ENCODE measurements at regions of chr15 and their contacts with region 1.

Region 1: GRCh38 chr15:93018580-93018979 is 70.4 kb downstream of the RGMA start:
- DNase-seq: no peak
- ATAC-seq: no peak
- H3K4me3 Mint-ChIP-seq: no peak overlapping the region
- H3K27ac Mint-ChIP-seq: peak overlapping the region; percentile 41
- H3K4me1 Mint-ChIP-seq: peaks cover 62% of the 10 kb centered on the region
- H3K27me3 Mint-ChIP-seq: no peaks in the 10 kb centered on the region

Region 2: GRCh38 chr15:92903941-92904831 is 114.4 kb before region 1 on chr15:
- CTCF ChIA-PET with region 1: no interaction called
- DNase-seq: peak; percentile 100
- ATAC-seq: peak; percentile 87
- H3K4me3 Mint-ChIP-seq: peak overlapping the region; percentile 79
- H3K27ac Mint-ChIP-seq: peak overlapping the region; percentile 99
- H3K4me1 Mint-ChIP-seq: peaks cover 51% of the 10 kb centered on the region
- H3K27me3 Mint-ChIP-seq: no peaks in the 10 kb centered on the region

Region 3: GRCh38 chr15:93030430-93031105 is 12.0 kb after region 1 on chr15:
- CTCF ChIA-PET with region 1: interaction called, 29 read pairs
- DNase-seq: peak; percentile 73
- ATAC-seq: peak; percentile 86
- H3K4me3 Mint-ChIP-seq: no peak overlapping the region
- H3K27ac Mint-ChIP-seq: no peak overlapping the region
- H3K4me1 Mint-ChIP-seq: peaks cover 12% of the 10 kb centered on the region
- H3K27me3 Mint-ChIP-seq: no peaks in the 10 kb centered on the region

Region 4: GRCh38 chr15:93265111-93265556 is 246.6 kb after region 1 on chr15:
- CTCF ChIA-PET with region 1: no interaction called
- DNase-seq: no peak
- ATAC-seq: no peak
- H3K4me3 Mint-ChIP-seq: no peak overlapping the region
- H3K27ac Mint-ChIP-seq: no peak overlapping the region
- H3K4me1 Mint-ChIP-seq: no peaks in the 10 kb centered on the region
- H3K27me3 Mint-ChIP-seq: peaks cover 2% of the 10 kb centered on the region

Measured in activated CD8-positive, alpha-beta memory T cell treated with anti-CD3 and anti-CD28 coated beads, Interleukin-2, amount 10 ng/mL, durations not matched to agents 7 days and 5 days (primary cell).